GM12878 (cell line): ENCODE measurements at regions of chr5 and their contacts with region 1.

Region 1: GRCh38 chr5:78359831-78360673 is at the start of gene SCAMP1:
- DNase-seq: peak; percentile 83
- ATAC-seq: peak; percentile 94
- H3K4me3 ChIP-seq: peak within 1 kb of the TSS; percentile 94
- H3K27ac ChIP-seq: peak within 1 kb of the TSS; percentile 96
- H3K4me1 ChIP-seq: peaks cover 5% of the 10 kb centered on the region
- H3K27me3 ChIP-seq: no peaks in the 10 kb centered on the region
- CTCF ChIP-seq: peak; percentile 23 to 29 (median 28); a peak in 4 of 6 replicates
- EP300 ChIP-seq: peak; percentile 67 to 78
- POLR2A ChIP-seq: peak; percentile 94
- RAD21 ChIP-seq: no peak
- polyA plus RNA-seq, gene SCAMP1: 9.1 to 21.2 TPM

Region 2: DNA sequence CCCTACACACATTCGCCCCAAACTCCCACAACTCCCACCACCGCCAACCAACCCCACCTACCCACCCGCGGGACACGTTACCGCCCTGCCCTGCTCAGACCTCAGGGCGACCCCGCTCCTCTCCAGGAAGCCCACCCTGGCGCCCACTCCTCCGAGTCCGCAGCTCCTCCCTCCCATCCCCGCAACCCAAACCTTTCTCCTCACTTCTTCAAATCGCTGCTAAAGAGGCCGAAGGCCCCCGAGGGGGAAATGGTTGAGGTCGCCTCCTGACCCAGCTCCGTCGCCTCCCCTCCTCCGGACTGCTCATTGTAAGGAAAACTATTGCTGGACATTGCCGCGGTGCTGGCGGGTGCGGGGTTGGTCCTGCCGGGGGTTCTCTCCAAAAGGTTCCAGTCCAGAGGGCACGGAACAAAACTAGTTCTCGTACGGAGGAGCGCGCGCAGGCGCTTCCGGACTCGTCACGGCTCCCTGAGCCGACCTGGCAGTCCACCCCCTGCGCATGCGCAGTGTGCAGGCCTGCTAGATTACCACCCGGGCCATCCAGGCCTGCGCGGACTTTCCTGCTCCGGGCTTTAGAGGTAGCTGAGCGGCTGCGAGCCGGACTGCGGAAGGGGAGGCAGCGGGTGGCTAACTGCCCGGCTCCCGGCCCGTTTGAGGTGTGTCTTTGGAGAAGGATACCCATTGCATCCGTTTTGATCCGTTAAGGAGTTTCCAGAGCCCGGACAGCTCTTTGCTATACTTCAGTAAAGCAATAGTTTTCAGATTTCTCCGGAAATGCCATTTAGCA is 65.6 kb before region 1 on chr5 and contains the start of gene AP3B1:
- CTCF ChIA-PET with region 1: interaction called, 5 read pairs
- POLR2A ChIA-PET with region 1: interaction called, 17 read pairs
- RAD21 ChIA-PET with region 1: interaction called, 7 read pairs
- SMC1A ChIA-PET with region 1: interaction called, 12 read pairs
- in situ Hi-C with region 1: loop called (anchors 5 kb)
- intact Hi-C with region 1: loop called (anchors 1 kb)
- DNase-seq: peak; percentile 89
- ATAC-seq: peak; percentile 91
- H3K4me3 ChIP-seq: peak within 1 kb of the TSS; percentile 97
- H3K27ac ChIP-seq: peak within 1 kb of the TSS; percentile 89
- H3K4me1 ChIP-seq: no peaks in the 10 kb centered on the region
- H3K27me3 ChIP-seq: no peaks in the 10 kb centered on the region
- CTCF ChIP-seq: no peak
- EP300 ChIP-seq: no peak; a peak in 1 of 4 replicates
- POLR2A ChIP-seq: peak; percentile 91
- RAD21 ChIP-seq: no peak
- polyA plus RNA-seq, gene AP3B1: 32.8 to 36.2 TPM

Region 3: GRCh38 chr5:78373231-78373630 is 13.2 kb after region 1 on chr5:
- CTCF ChIA-PET with region 1: interaction called, 10 read pairs
- POLR2A ChIA-PET with region 1: interaction called, 5 read pairs
- RAD21 ChIA-PET with region 1: no interaction called
- SMC1A ChIA-PET with region 1: interaction called, 9 read pairs
- in situ Hi-C with region 1: no loop called
- intact Hi-C with region 1: no loop called
- DNase-seq: no peak
- ATAC-seq: no peak
- H3K4me3 ChIP-seq: no peak overlapping the region
- H3K27ac ChIP-seq: no peak overlapping the region
- H3K4me1 ChIP-seq: peaks cover 3% of the 10 kb centered on the region; the same call in 1 of the 2 replicates
- H3K27me3 ChIP-seq: no peaks in the 10 kb centered on the region
- CTCF ChIP-seq: no peak
- EP300 ChIP-seq: no peak
- POLR2A ChIP-seq: no peak
- RAD21 ChIP-seq: no peak